ENCODE measurements at regions of chr10 and their contacts with region 1.

Region 1: GRCh38 chr10:121900443-121901174 is 27.2 kb downstream of the ATE1 start:
- DNase-seq: no peak
- ATAC-seq: peak in 3 of 4 donors; percentile 65 to 81 (median 72)
- H3K4me3 ChIP-seq: no peak overlapping the region
- H3K27ac ChIP-seq: no peak overlapping the region
- H3K4me1 ChIP-seq: peaks cover 0 to 7% (median 0%) of the 10 kb centered on the region in 12 donors
- H3K27me3 ChIP-seq: no peaks in the 10 kb centered on the region
- CTCF ChIP-seq: peak; percentile 54 to 78 (median 68)
- POLR2A ChIP-seq: no peak

Region 2: DNA sequence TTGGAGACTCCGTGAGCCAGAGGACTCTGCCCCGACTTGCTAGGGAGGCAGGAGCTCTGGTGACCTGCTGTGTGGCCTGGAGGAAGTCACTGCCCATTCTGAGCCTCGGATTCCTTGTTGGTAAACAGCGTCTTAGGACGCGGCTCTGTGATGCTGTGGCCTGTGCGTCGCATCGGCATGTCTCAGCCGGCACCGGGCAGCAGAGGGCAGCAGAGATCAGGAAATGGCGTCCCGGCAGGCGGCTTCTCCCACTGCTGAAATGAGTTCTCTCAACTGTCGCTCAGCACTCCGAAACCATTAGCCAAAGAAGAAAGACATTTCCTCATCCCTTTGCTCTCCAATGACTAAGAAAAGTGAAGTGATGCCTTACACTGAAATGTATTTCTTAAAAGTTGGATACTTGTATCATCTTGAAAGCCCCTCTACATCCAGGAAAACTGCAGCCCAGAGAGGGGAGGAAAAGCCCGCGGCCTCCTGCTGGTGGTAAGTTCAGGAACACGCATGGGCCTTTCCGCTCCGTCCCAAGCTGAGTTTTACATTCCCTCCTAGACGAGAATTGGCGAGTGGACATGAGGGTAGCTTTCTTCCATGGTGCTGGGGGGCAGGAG is 957.7 kb before region 1 on chr10:
- intact Hi-C with region 1: loop called in 5 of 10 experiments (anchors 5 kb)
- DNase-seq: peak; percentile 69 to 86 (median 77)
- ATAC-seq: peak; percentile 55 to 94 (median 90)
- H3K4me3 ChIP-seq: peak overlapping the region in 3 of 12 donors; percentile 9 to 28 (median 12)
- H3K27ac ChIP-seq: no peak overlapping the region
- H3K4me1 ChIP-seq: peaks cover 0 to 7% (median 4%) of the 10 kb centered on the region in 12 donors
- H3K27me3 ChIP-seq: peaks cover 0 to 31% (median 0%) of the 10 kb centered on the region in 9 donors
- CTCF ChIP-seq: peak; percentile 79 to 90 (median 85)
- POLR2A ChIP-seq: no peak

Region 3: DNA sequence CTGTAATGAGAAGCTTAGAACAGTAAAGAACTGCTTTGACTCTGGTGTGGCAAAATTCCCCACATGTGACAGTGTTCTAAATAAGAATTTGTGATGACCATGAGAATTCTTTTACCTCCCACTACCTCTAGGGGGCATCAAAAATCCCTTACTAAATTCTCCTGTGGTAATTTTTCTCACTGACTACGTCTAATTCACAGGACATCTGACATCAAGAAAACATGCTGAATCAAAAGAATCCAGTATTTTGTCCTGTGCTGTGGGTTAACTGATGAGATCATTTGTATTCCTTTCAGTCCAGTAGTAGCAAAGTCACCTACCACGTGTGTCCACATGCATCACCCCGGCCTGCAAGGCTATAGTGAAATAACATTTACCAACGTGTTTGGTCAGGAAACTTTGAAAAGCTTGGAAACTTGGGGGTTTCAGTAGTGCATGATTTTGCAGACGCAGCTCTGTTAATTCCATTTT is 76.6 kb before region 1 on chr10:
- intact Hi-C with region 1: loop called in 1 of 10 experiments (anchors 5 kb)
- DNase-seq: no peak
- ATAC-seq: peak in 2 of 4 donors; percentile 34 to 58
- H3K4me3 ChIP-seq: no peak overlapping the region
- H3K27ac ChIP-seq: no peak overlapping the region
- H3K4me1 ChIP-seq: peaks cover 0 to 7% (median 0%) of the 10 kb centered on the region in 12 donors
- H3K27me3 ChIP-seq: no peaks in the 10 kb centered on the region
- CTCF ChIP-seq: peak; percentile 49 to 76 (median 66)
- POLR2A ChIP-seq: no peak

Region 4: DNA sequence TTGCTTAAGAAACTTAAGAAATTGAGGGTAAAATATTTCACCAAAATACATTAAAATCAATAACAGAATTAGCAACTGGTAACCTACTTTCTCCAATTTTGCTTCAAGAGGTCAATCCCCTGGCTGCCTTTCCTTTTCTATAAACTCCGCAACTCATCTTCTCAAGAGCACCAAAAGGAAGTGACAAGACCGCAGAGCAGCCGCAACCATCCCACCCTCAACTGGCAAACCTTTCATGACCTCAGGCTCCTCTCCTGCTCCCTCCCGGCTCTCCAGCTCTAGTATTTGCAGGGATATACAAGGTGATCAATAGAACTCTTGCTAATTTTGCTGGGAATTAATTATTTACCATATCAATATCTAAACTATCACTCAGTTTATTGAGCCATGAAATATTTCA is 61.7 kb before region 1 on chr10:
- intact Hi-C with region 1: no loop called
- DNase-seq: no peak
- ATAC-seq: no peak
- H3K4me3 ChIP-seq: no peak overlapping the region
- H3K27ac ChIP-seq: no peak overlapping the region
- H3K4me1 ChIP-seq: peaks cover 0 to 4% (median 0%) of the 10 kb centered on the region in 12 donors
- H3K27me3 ChIP-seq: no peaks in the 10 kb centered on the region
- CTCF ChIP-seq: no peak
- POLR2A ChIP-seq: no peak

Region 5: DNA sequence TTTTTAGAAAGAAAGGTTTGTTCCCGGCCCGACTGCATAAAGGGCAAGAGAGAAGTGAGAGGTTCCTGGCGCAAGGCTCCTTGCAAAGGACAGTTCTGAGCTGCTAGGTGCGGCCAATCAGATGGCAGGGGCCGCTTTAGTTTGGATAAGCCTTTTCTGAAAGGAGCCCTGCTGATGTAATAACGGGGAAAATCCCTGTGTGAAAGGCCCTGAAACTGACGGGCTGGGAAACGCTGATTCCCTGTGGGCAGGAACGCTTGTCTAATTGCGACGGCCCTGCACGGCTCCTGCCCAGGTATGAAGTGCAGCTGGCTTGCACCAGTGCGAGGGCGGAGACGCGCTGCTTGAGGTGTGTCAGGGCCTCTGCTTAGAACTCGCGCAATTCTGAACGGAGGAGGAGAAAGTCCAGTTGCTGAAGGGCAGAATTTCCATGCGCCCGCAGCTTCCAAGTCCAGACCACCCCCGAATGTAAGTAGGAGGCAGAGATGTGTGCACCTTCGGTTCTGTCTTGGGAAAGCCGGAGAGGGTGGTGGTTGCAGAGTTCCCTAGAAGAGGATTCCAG is 118.9 kb after region 1 on chr10:
- intact Hi-C with region 1: no loop called
- DNase-seq: peak in 1 of 5 donors; percentile 67
- ATAC-seq: peak in 3 of 4 donors; percentile 27 to 58 (median 56)
- H3K4me3 ChIP-seq: peak overlapping the region in 5 of 12 donors; percentile 5 to 25 (median 13)
- H3K27ac ChIP-seq: peak overlapping the region; percentile 6 to 87 (median 64)
- H3K4me1 ChIP-seq: peaks cover 0 to 48% (median 7%) of the 10 kb centered on the region in 12 donors
- H3K27me3 ChIP-seq: peaks cover 0 to 10% (median 0%) of the 10 kb centered on the region in 9 donors
- CTCF ChIP-seq: no peak
- POLR2A ChIP-seq: no peak